Heart left ventricle (tissue), 16 donors: ENCODE measurements at regions of chr17 and their contacts with region 1.

Region 1: DNA sequence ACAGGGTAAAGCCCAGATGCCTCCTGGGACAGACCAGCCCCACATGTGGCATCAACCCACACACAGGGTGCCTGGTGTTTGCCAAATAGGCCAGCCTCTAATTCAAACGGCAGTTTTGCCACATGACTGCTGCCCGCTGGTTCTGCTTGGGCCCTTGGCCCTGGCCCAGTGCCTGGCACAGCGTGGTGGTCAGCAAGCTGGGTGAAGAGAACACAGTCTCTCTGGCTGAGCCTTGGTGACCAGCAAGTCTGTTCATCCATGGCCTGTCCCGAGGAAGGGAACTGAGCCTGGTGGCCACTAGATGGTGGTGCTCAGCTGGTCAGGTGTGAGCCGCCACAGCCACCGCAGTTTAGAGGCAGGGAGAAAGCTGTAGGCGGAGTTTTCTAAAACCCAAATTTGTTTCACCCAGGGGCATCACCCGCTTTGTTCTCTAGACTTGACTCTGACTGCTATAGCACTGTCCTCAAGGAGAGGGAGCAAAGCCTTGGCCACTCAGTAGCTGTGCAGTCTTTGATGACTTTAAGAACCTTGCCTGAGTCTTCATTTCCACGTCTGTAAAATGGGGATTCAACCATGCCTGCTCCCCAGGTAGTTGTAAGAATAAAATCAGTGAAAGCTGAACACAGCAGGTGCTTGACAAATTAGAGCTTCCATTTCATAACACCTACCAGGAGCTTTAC is 4.7 kb upstream of the GFAP start:
- DNase-seq: peak; percentile 79 to 88 (median 84)
- ATAC-seq: peak; percentile 69 to 85 (median 84)
- H3K4me3 ChIP-seq: no peak overlapping the region
- H3K27ac ChIP-seq: peak overlapping the region in 5 of 12 donors; percentile 17 to 74 (median 70)
- H3K4me1 ChIP-seq: peaks cover 0 to 38% (median 16%) of the 10 kb centered on the region in 12 donors
- H3K27me3 ChIP-seq: peaks cover 0 to 4% (median 0%) of the 10 kb centered on the region in 9 donors
- CTCF ChIP-seq: peak; percentile 70 to 90 (median 84)
- POLR2A ChIP-seq: no peak

Region 2: GRCh38 chr17:44968226-44969143 is 48.5 kb after region 1 on chr17 and contains the start of gene C1QL1:
- intact Hi-C with region 1: loop called in 1 of 10 experiments (anchors 5 kb)
- DNase-seq: peak; percentile 92 to 95 (median 94)
- ATAC-seq: peak; percentile 91 to 98 (median 98)
- H3K4me3 ChIP-seq: peak within 1 kb of the TSS in 11 of 12 donors; percentile 0 to 58 (median 48)
- H3K27ac ChIP-seq: no peak within 1 kb of the TSS
- H3K4me1 ChIP-seq: peaks cover 0 to 39% (median 15%) of the 10 kb centered on the region in 12 donors
- H3K27me3 ChIP-seq: peaks cover 24 to 69% (median 39%) of the 10 kb centered on the region in 9 donors
- CTCF ChIP-seq: peak in 3 of 12 donors; percentile 9 to 24 (median 13)
- POLR2A ChIP-seq: no peak
- total RNA-seq, gene C1QL1: 0.66 to 5.8 (median 1.4) TPM

Region 3: DNA sequence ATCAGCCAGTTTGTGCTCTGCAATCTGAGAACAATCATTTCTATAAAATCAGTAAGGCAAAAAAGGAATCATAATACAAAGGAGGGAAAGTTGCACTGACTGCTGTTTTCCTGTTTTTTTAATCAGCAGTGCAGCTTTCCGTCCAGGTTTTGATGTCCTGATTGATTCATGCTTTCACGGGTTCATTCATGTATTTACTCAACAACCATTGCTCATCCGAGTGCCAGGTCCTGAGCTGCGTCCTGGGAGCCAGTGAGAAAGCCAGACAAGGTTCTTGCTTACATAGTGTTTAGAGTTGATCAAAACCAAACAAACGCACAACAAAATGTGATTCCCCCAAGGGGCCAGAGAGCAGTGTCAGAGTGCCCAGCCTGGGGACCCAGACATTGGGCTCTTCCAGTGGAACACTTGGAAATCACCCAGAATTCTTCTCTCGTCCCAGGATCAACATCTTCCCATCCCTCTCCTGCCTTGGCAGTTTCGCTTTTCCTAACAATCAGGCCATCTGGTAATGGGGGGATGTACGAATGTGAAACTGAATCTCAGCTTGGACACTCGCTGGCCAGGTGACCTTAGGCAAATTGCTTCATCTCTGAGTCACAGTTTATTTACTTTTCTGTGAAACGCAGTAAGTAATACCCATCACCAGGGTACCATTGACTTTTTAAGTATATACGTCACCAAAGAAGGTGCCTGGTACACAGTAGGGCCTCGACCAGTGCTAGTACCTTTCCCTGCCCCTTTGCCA is 61.4 kb after region 1 on chr17:
- intact Hi-C with region 1: loop called in 3 of 10 experiments (anchors 2 to 5 kb)
- DNase-seq: no peak
- ATAC-seq: no peak
- H3K4me3 ChIP-seq: no peak overlapping the region
- H3K27ac ChIP-seq: peak overlapping the region in 10 of 12 donors; percentile 32 to 89 (median 78)
- H3K4me1 ChIP-seq: peaks cover 0 to 59% (median 18%) of the 10 kb centered on the region in 12 donors
- H3K27me3 ChIP-seq: peaks cover 0 to 25% (median 0%) of the 10 kb centered on the region in 9 donors
- CTCF ChIP-seq: no peak
- POLR2A ChIP-seq: no peak

Region 4: GRCh38 chr17:45277216-45277849 is 357.3 kb after region 1 on chr17:
- intact Hi-C with region 1: no loop called
- DNase-seq: peak; percentile 90 to 97 (median 93)
- ATAC-seq: peak; percentile 62 to 76 (median 67)
- H3K4me3 ChIP-seq: peak overlapping the region in 1 of 12 donors; percentile 33
- H3K27ac ChIP-seq: peak overlapping the region; percentile 28 to 89 (median 78)
- H3K4me1 ChIP-seq: peaks cover 0 to 43% (median 26%) of the 10 kb centered on the region in 12 donors
- H3K27me3 ChIP-seq: no peaks in the 10 kb centered on the region
- CTCF ChIP-seq: peak; percentile 72 to 87 (median 82)
- POLR2A ChIP-seq: peak in 1 of 2 donors; percentile 25